ENCODE measurements at regions of chr3 and their contacts with region 1.

Region 1: DNA sequence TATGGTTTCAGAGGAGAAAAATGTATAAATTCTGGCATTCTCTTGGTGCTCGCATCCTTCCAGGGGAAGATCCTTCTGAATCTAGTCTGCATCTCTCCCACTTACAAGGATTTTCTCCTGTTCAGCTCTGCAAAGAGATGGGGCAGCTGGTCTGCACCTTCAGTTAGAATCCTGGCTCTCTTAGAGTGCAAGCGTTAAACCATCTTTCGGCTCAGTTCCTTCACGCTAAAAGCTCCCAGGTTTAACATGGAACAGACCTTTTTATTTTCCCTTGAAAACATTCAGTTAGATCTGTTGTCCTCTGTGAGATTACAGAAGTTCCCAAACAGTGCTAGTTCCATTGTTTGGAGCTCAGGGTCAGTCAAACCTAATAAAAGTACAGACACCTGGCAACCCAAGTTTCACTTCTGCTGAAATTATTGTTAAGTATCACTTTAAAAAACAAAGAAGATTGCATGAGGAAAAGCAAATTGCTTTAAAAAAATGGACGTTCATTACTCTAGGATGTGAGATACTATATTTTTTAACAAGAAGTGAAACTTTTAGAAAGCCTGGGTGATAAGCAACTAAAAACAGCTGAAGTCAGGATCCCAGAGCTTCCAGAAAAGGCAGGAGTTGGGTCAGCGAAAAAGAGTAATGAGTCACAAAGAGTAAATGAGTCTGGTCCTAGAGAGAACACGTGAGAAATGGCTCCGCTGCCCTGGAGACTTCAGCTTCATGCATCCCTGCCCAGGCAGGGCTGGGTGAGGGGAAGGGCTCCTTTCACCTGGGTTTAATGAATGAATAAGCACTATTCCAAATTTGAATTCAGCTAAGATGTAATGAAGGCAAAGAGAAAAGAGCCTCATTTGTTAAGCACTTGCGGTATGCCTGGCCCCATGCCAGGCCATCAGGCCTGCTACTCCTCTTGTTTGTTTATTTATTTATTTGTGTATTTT is 63.3 kb downstream of the ABTB1 start:
- DNase-seq: peak; percentile 88
- H3K4me3 ChIP-seq: peak overlapping the region; percentile 85
- H3K27ac ChIP-seq: peak overlapping the region; percentile 97
- H3K4me1 ChIP-seq: peaks cover 71% of the 10 kb centered on the region
- CTCF ChIP-seq: no peak

Region 2: DNA sequence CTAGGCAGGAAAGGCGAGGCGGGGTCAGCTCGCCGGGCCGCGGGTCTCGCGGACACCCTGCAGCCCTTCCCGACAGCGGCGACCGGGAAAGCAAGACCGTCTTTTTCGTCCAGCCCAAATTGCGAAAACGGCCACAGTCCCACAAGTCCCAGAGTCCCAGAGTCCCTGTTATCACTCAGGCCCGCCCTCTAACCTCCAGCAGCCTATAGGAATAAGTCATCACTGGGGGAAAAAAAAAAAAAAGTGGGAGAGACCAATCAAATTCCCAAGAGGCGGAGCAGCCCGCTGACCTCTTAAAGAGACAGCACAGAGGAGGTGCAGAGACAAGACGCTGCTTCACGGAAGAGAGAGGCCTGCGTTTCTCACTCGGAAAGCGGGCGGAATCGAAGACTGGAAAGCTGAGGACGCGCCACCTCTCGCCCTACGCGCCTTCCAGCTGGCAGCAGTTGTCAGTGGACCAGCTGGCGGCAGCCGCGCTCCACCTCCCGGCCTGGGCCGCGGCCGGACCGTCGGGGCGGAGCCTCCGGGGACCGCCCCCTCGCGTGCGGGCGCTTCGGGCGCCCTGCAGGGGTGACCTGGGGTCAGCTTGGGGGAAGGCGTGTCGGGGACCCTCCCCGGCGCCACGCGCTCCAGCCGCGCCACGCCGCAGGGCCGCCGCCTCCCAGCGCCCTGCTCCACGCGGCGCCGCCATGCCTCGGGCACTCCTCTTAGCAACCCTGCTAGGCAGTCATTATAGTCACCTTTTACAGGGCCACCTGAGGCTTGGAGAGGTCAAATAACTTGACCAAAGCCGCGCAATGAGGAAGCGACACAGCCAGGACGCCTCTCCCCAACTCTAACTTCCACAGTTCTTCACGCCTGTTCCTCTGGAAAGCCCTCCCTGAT is 145.2 kb before region 1 on chr3 and contains the start of gene TPRA1:
- CTCF ChIA-PET with region 1: no interaction called
- POLR2A ChIA-PET with region 1: no interaction called
- intact Hi-C with region 1: loop called (anchors 2 kb)
- DNase-seq: peak; percentile 98
- H3K4me3 ChIP-seq: peak within 1 kb of the TSS; percentile 85
- H3K27ac ChIP-seq: peak within 1 kb of the TSS; percentile 83
- H3K4me1 ChIP-seq: peaks cover 43% of the 10 kb centered on the region
- CTCF ChIP-seq: peak; percentile 57
- total RNA-seq, gene TPRA1: 25.6 and 32.3 TPM in 2 replicates

Region 3: DNA sequence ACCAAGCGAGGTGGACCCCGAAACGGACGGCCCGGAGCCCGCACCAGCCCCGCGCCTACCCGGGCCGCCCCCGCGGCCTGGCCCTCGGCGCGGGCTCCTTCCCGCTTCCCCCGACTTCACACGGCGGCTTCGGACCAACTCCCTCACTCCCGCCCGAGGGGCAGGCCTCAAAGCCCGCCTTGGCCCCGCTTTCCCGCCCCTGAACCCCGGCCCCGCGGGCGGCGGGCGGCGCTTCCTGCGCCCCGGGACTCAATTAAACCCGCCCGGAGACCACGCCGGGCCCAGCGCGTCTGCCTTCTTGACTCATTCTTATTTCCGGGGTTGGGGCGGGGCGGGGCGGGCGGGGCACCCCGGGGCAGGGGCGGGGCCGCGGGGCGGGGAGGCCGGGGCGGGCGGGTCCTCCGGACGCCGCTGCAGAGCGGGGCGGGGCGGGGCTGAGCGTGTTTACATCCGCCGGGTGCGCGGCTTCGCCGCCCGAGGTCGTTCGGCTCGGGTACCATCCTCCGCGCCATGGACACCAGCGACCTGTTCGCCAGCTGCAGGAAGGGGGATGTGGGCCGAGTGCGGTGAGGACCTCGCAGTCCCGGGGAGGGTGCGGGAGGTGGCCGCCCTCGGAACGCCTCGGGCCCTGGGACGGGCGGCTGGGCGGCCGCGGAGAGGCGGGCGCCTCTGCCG is 63.4 kb before region 1 on chr3 and contains the start of gene ABTB1:
- CTCF ChIA-PET with region 1: no interaction called
- POLR2A ChIA-PET with region 1: no interaction called
- intact Hi-C with region 1: loop called (anchors 2 kb)
- DNase-seq: peak; percentile 90
- H3K4me3 ChIP-seq: peak within 1 kb of the TSS; percentile 90
- H3K27ac ChIP-seq: peak within 1 kb of the TSS; percentile 51
- H3K4me1 ChIP-seq: peaks cover 24% of the 10 kb centered on the region
- CTCF ChIP-seq: no peak; the same call in 1 of the 2 replicates
- total RNA-seq, gene ABTB1: 4.4 and 9.1 TPM in 2 replicates

Region 4: GRCh38 chr3:127697551-127698240 is 38.3 kb before region 1 on chr3:
- CTCF ChIA-PET with region 1: interaction called, 3 read pairs
- POLR2A ChIA-PET with region 1: interaction called, 5 read pairs
- intact Hi-C with region 1: loop called (anchors 2 kb)
- DNase-seq: peak; percentile 76
- H3K4me3 ChIP-seq: no peak overlapping the region
- H3K27ac ChIP-seq: peak overlapping the region; percentile 15
- H3K4me1 ChIP-seq: peaks cover 14% of the 10 kb centered on the region
- CTCF ChIP-seq: no peak

Region 5: GRCh38 chr3:127800508-127800907 is 64.5 kb after region 1 on chr3:
- CTCF ChIA-PET with region 1: no interaction called
- POLR2A ChIA-PET with region 1: no interaction called
- intact Hi-C with region 1: no loop called
- DNase-seq: no peak
- H3K4me3 ChIP-seq: no peak overlapping the region
- H3K27ac ChIP-seq: no peak overlapping the region
- H3K4me1 ChIP-seq: no peaks in the 10 kb centered on the region
- CTCF ChIP-seq: no peak

Region 6: GRCh38 chr3:128051837-128052594 is 316.0 kb after region 1 on chr3 and contains the start of gene SEC61A1:
- CTCF ChIA-PET with region 1: no interaction called
- POLR2A ChIA-PET with region 1: no interaction called
- intact Hi-C with region 1: loop called (anchors 5 kb)
- DNase-seq: peak; percentile 96
- H3K4me3 ChIP-seq: peak within 1 kb of the TSS; percentile 88
- H3K27ac ChIP-seq: peak within 1 kb of the TSS; percentile 57
- H3K4me1 ChIP-seq: peaks cover 31% of the 10 kb centered on the region
- CTCF ChIP-seq: no peak
- total RNA-seq, gene SEC61A1: 72.9 and 85.2 TPM in 2 replicates